ENCODE measurements at regions of chr19 and their contacts with region 1.

Region 1: GRCh38 chr19:23758187-23759074 is at the start of gene ZNF681:
- DNase-seq: peak; percentile 73 to 95 (median 80)
- ATAC-seq: peak; percentile 88
- H3K4me3 ChIP-seq: peak within 1 kb of the TSS; percentile 85
- H3K4me3 Mint-ChIP-seq: peak within 1 kb of the TSS; percentile 98
- H3K27ac ChIP-seq: peak within 1 kb of the TSS; percentile 64 to 80
- H3K27ac Mint-ChIP-seq: peak within 1 kb of the TSS; percentile 98
- H3K4me1 ChIP-seq: peaks cover 25% of the 10 kb centered on the region
- H3K4me1 Mint-ChIP-seq: peaks cover 32% of the 10 kb centered on the region
- H3K27me3 ChIP-seq: no peaks in the 10 kb centered on the region
- H3K27me3 Mint-ChIP-seq: no peaks in the 10 kb centered on the region
- CTCF ChIP-seq: no peak
- total RNA-seq, gene ZNF681: 1.6 to 2.6 TPM

Region 2: DNA sequence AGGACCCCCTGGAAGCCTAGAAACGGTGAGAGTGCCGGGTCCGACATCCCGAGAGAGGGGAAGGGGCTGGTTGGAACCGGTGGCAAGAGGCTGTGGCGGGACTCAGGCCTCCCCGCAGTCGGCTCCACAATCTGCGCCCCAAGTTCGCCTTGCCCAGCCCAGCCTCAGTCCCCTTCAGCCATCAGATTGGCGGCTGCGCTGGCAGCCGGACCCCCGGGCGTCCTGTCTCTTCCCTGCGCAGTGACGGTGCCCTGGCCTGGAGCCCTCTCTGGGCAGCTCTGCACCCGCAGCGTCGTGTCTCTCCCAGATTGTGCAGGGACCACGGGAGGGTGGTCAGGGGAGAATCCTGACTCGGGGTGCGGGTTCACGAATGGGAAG is 1124.0 kb before region 1 on chr19:
- CTCF ChIA-PET with region 1: no interaction called
- POLR2A ChIA-PET with region 1: interaction called, 3 read pairs
- intact Hi-C with region 1: loop called in 1 of 2 experiments (anchors 10 kb)
- DNase-seq: no peak
- ATAC-seq: peak; percentile 16
- H3K4me3 ChIP-seq: peak overlapping the region; percentile 65
- H3K4me3 Mint-ChIP-seq: peak overlapping the region; percentile 96
- H3K27ac ChIP-seq: no peak overlapping the region
- H3K27ac Mint-ChIP-seq: peak overlapping the region; percentile 83
- H3K4me1 ChIP-seq: no peaks in the 10 kb centered on the region
- H3K4me1 Mint-ChIP-seq: peaks cover 16% of the 10 kb centered on the region
- H3K27me3 ChIP-seq: peaks cover 0 to 2% of the 10 kb centered on the region in 2 experiments
- H3K27me3 Mint-ChIP-seq: no peaks in the 10 kb centered on the region
- CTCF ChIP-seq: no peak

Region 3: GRCh38 chr19:23273590-23274413 is 484.6 kb before region 1 on chr19:
- CTCF ChIA-PET with region 1: no interaction called
- POLR2A ChIA-PET with region 1: interaction called, 11 read pairs
- intact Hi-C with region 1: loop called in 1 of 2 experiments (anchors 5 kb)
- DNase-seq: peak; percentile 80 to 96 (median 90)
- ATAC-seq: peak; percentile 98
- H3K4me3 ChIP-seq: peak overlapping the region; percentile 98
- H3K4me3 Mint-ChIP-seq: peak overlapping the region; percentile 99
- H3K27ac ChIP-seq: peak overlapping the region; percentile 72 to 88
- H3K27ac Mint-ChIP-seq: peak overlapping the region; percentile 97
- H3K4me1 ChIP-seq: peaks cover 11% of the 10 kb centered on the region
- H3K4me1 Mint-ChIP-seq: peaks cover 32% of the 10 kb centered on the region
- H3K27me3 ChIP-seq: no peaks in the 10 kb centered on the region
- H3K27me3 Mint-ChIP-seq: no peaks in the 10 kb centered on the region
- CTCF ChIP-seq: no peak

Region 4: DNA sequence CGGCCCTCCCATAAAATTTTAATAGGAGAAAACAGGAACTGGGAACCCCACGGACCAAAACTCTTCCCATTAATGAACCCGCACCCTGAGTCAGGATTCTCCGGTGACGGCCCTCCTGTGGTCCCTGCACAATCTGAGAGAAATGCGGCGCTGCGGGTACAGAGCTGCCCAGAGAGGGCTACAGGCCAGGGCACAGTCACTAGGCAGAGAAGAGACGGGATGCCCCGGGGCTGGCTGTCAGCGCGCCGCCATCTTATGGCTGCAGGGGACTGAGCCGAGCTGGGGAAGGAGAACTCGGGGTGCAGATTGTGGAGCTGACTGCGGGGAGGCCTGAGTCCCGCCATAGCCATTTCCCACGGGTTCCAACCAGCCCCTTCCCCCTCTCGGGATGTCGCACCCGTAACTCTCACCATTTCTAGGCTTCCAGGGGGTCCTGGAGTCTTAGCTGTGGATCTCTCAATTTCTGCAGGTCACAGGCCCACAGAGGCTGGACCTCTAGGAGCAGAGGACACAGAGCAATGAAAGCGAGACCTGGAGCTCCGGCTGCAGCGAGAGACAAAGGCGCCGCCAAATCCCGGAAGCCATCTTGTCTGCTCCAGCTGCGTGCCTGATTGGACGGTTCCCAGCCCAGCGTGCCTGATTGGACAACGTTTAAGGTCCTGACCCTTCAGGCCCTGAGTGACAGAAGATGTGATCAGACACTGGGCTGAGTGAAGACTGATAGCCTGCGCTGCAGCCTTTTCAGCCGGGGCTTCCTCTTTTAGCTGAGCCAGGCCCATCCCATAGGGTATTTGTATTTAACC is 71.6 kb before region 1 on chr19 and contains the start of gene ZNF675:
- CTCF ChIA-PET with region 1: interaction called, 4 read pairs
- POLR2A ChIA-PET with region 1: interaction called, 42 read pairs
- intact Hi-C with region 1: loop called (anchors 2 to 5 kb)
- DNase-seq: peak; percentile 76 to 95 (median 84)
- ATAC-seq: peak; percentile 96
- H3K4me3 ChIP-seq: peak within 1 kb of the TSS; percentile 77
- H3K4me3 Mint-ChIP-seq: peak within 1 kb of the TSS; percentile 100
- H3K27ac ChIP-seq: peak within 1 kb of the TSS; percentile 79 to 82
- H3K27ac Mint-ChIP-seq: peak within 1 kb of the TSS; percentile 99
- H3K4me1 ChIP-seq: peaks cover 19% of the 10 kb centered on the region
- H3K4me1 Mint-ChIP-seq: peaks cover 49% of the 10 kb centered on the region
- H3K27me3 ChIP-seq: no peaks in the 10 kb centered on the region
- H3K27me3 Mint-ChIP-seq: no peaks in the 10 kb centered on the region
- CTCF ChIP-seq: no peak
- total RNA-seq, gene ZNF675: 15.6 to 16.4 TPM

Region 5: DNA sequence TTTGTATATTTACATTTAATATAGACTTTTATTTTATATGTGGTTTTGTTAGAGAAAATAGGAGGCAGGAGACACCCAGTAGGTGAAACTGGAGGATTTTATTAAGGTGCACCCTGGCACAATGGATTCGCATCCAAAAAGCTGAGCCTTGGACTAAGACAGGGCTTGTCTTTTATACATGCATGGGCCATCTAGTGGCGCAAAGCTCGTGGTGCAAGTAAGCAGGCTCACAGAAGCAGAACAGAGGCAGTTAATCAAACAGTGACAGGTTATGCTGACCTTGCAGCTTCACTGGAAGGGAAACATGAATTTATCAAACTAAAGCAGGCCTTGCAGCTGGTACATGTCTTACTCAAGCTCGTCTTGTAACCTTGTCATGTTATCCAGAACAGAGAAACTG is 59.1 kb after region 1 on chr19:
- CTCF ChIA-PET with region 1: interaction called, 3 read pairs
- POLR2A ChIA-PET with region 1: interaction called, 14 read pairs
- intact Hi-C with region 1: loop called in 1 of 2 experiments (anchors 5 kb)
- DNase-seq: peak; percentile 14 to 68 (median 33)
- ATAC-seq: peak; percentile 82
- H3K4me3 ChIP-seq: no peak overlapping the region
- H3K4me3 Mint-ChIP-seq: no peak overlapping the region
- H3K27ac ChIP-seq: no peak overlapping the region
- H3K27ac Mint-ChIP-seq: no peak overlapping the region
- H3K4me1 ChIP-seq: no peaks in the 10 kb centered on the region
- H3K4me1 Mint-ChIP-seq: peaks cover 4% of the 10 kb centered on the region
- H3K27me3 ChIP-seq: no peaks in the 10 kb centered on the region
- H3K27me3 Mint-ChIP-seq: no peaks in the 10 kb centered on the region
- CTCF ChIP-seq: peak; percentile 68

Region 6: DNA sequence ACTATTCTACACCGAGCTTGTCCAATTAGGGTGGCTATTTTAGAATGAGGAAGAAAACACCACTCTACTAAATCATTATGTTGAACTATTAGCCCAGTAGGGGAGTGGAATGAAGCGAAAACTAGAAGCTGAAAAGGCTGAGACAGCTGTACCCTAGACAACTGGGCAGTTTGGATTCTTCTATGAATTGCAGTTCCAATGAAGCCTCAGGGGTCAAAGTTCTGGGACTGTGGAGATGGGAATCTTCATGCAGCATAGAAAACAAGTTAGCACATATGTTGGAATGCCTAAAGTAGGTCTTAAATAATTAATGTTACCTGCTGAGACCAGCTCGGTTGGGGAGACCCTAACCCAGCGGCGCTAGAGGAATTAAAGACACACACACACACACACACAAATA is 93.5 kb after region 1 on chr19:
- CTCF ChIA-PET with region 1: no interaction called
- POLR2A ChIA-PET with region 1: no interaction called
- intact Hi-C with region 1: no loop called
- DNase-seq: no peak
- ATAC-seq: no peak
- H3K4me3 ChIP-seq: no peak overlapping the region
- H3K4me3 Mint-ChIP-seq: no peak overlapping the region
- H3K27ac ChIP-seq: no peak overlapping the region
- H3K27ac Mint-ChIP-seq: no peak overlapping the region
- H3K4me1 ChIP-seq: no peaks in the 10 kb centered on the region
- H3K4me1 Mint-ChIP-seq: no peaks in the 10 kb centered on the region
- H3K27me3 ChIP-seq: no peaks in the 10 kb centered on the region
- H3K27me3 Mint-ChIP-seq: no peaks in the 10 kb centered on the region
- CTCF ChIP-seq: no peak

Region 7: GRCh38 chr19:24033301-24033962 is 275.0 kb after region 1 on chr19:
- CTCF ChIA-PET with region 1: no interaction called
- POLR2A ChIA-PET with region 1: interaction called, 24 read pairs
- intact Hi-C with region 1: loop called (anchors 5 to 10 kb)
- DNase-seq: peak; percentile 65 to 92 (median 77)
- ATAC-seq: peak; percentile 99
- H3K4me3 ChIP-seq: peak overlapping the region; percentile 99
- H3K4me3 Mint-ChIP-seq: peak overlapping the region; percentile 100
- H3K27ac ChIP-seq: peak overlapping the region; percentile 66 to 85
- H3K27ac Mint-ChIP-seq: peak overlapping the region; percentile 94
- H3K4me1 ChIP-seq: peaks cover 51% of the 10 kb centered on the region
- H3K4me1 Mint-ChIP-seq: peaks cover 47% of the 10 kb centered on the region
- H3K27me3 ChIP-seq: no peaks in the 10 kb centered on the region
- H3K27me3 Mint-ChIP-seq: no peaks in the 10 kb centered on the region
- CTCF ChIP-seq: no peak

Measured in CD4-positive, alpha-beta T cell (primary cell).